CD4-positive, alpha-beta T cell (primary cell): ENCODE measurements at regions of chr7 and their contacts with region 1.

Region 1: GRCh38 chr7:77536413-77537135 is 521 bp upstream of the PTPN12 start:
- DNase-seq: peak; percentile 92 to 99 (median 97)
- ATAC-seq: peak; percentile 88
- H3K4me3 ChIP-seq: peak overlapping the region; percentile 86
- H3K4me3 Mint-ChIP-seq: peak overlapping the region; percentile 95
- H3K27ac ChIP-seq: peak overlapping the region; percentile 45 to 55
- H3K27ac Mint-ChIP-seq: peak overlapping the region; percentile 83
- H3K4me1 ChIP-seq: peaks cover 19% of the 10 kb centered on the region
- H3K4me1 Mint-ChIP-seq: peaks cover 20% of the 10 kb centered on the region
- H3K27me3 ChIP-seq: no peaks in the 10 kb centered on the region
- H3K27me3 Mint-ChIP-seq: no peaks in the 10 kb centered on the region
- CTCF ChIP-seq: no peak

Region 2: DNA sequence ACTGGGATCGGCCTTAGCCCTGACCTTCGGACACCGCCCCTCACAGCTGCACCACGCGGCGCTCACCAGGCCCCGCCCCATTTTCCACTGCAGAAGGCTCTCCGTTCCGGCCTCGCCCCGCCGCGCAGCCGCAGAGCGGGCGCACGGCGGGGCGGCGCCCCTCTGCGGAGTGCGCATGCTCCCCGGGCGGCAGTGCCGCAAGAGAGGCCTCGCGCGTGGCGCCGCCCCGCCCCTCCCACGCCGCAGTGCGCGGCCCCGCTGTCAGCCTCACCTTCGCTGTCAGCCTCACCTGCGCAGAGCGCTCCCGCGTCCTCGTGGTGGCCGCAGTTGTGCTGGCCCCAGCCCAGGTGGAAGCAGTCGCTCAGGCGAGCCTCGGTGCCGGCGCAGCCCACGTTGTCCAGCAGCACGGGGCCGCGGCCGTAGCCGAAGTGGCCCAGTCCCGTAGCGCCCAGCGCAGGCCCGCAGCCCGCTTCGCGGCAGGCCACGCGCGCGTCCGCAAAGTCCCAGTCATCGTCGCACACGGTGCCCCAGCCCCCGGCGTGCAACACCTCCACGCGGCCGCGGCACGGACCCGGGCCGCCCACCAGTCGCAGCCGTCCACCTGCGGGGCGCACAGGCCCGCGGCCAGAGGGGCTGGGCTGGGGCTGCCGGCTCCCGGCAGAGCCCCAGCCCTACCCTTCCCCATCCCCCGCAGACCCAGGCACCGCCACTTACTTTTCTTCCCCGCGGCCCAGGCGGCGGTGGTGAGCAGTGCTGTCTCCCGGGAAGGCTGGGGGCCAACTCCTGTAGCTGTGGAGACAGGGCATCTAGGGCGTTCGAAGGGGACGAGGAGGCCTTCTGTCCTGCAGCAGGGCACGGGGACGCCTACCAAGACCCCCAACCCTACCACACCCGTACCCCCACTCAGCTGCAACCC is 1143.2 kb before region 1 on chr7:
- CTCF ChIA-PET with region 1: no interaction called
- POLR2A ChIA-PET with region 1: no interaction called
- intact Hi-C with region 1: loop called in 1 of 2 experiments (anchors 10 kb)
- DNase-seq: peak; percentile 81 to 97 (median 90)
- ATAC-seq: peak; percentile 81
- H3K4me3 ChIP-seq: peak overlapping the region; percentile 60
- H3K4me3 Mint-ChIP-seq: peak overlapping the region; percentile 88
- H3K27ac ChIP-seq: peak overlapping the region; percentile 42 to 46
- H3K27ac Mint-ChIP-seq: peak overlapping the region; percentile 88
- H3K4me1 ChIP-seq: peaks cover 33% of the 10 kb centered on the region
- H3K4me1 Mint-ChIP-seq: peaks cover 22% of the 10 kb centered on the region
- H3K27me3 ChIP-seq: no peaks in the 10 kb centered on the region
- H3K27me3 Mint-ChIP-seq: no peaks in the 10 kb centered on the region
- CTCF ChIP-seq: no peak

Region 3: GRCh38 chr7:77315182-77315591 is 221.4 kb before region 1 on chr7:
- CTCF ChIA-PET with region 1: no interaction called
- POLR2A ChIA-PET with region 1: no interaction called
- intact Hi-C with region 1: no loop called
- DNase-seq: no peak
- ATAC-seq: no peak
- H3K4me3 ChIP-seq: no peak overlapping the region
- H3K4me3 Mint-ChIP-seq: no peak overlapping the region
- H3K27ac ChIP-seq: no peak overlapping the region
- H3K27ac Mint-ChIP-seq: no peak overlapping the region
- H3K4me1 ChIP-seq: no peaks in the 10 kb centered on the region
- H3K4me1 Mint-ChIP-seq: no peaks in the 10 kb centered on the region
- H3K27me3 ChIP-seq: no peaks in the 10 kb centered on the region
- H3K27me3 Mint-ChIP-seq: no peaks in the 10 kb centered on the region
- CTCF ChIP-seq: no peak

Region 4: DNA sequence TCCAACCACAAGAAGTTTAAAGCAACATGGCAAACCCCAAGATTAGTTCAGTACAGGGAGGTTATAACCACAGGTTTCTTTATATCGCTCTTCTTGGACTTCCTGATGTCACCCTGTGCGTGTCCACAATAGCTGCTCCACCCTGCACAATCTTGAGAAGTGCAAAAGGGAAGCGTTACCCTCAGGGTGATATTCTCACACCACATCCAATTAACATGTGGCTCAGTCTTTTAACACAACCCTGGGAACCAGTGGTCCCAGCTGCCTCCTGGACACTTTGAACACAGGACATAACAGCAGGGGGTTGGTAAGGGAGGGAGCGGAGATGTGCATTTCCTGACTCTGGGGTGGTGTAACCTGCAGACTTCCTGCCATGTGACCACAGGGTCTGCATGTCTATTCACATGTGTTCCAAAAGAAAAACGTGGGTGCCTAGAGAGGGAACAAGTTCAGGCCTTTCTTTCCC is 185.0 kb before region 1 on chr7:
- CTCF ChIA-PET with region 1: no interaction called
- POLR2A ChIA-PET with region 1: interaction called, 4 read pairs
- intact Hi-C with region 1: loop called (anchors 2 kb)
- DNase-seq: peak; percentile 16 to 90 (median 42)
- ATAC-seq: peak; percentile 80
- H3K4me3 ChIP-seq: peak overlapping the region; percentile 23
- H3K4me3 Mint-ChIP-seq: peak overlapping the region; percentile 79
- H3K27ac ChIP-seq: no peak overlapping the region
- H3K27ac Mint-ChIP-seq: peak overlapping the region; percentile 86
- H3K4me1 ChIP-seq: peaks cover 36% of the 10 kb centered on the region
- H3K4me1 Mint-ChIP-seq: peaks cover 77% of the 10 kb centered on the region
- H3K27me3 ChIP-seq: no peaks in the 10 kb centered on the region
- H3K27me3 Mint-ChIP-seq: no peaks in the 10 kb centered on the region
- CTCF ChIP-seq: no peak

Region 5: DNA sequence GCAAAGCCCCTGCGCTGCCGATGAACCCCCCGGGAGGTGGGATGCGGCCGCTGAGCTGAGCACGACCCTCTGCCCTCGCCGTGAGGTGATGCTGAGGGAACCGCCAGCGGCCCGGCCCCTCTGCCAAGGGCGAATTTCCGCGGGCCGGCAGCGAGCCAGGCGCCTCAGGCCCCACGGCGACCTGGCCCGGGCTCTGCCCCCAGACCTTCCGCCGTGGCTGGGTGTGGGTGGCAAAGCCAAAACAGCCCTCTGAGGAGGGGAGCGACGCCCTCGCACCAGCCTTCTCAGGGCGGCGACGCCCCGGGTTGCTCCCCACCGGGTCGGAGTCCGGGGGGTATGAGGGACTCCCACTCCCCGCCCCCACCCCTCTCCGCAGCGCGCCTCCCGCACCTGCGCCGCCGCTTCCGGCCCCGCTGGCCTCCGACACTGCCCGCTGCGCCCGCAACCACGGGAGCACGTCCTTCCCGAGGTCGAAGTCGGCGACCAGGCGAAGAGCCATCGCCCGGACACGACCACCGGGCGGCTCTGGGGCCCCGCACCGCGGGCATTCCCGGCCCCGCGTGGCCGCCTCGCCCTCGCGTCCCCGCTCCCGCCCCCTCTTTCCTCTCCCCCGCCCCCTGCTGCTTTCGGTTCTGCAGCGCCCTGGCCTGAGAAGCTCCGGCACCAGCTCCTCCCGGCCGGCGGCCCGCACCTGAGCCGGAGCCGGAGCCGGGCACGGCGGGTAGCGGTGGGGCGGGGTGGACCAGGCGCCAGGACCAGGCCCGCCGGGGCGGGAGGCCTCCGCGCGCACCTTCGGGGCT is 120.6 kb before region 1 on chr7 and contains the start of gene GSAP:
- CTCF ChIA-PET with region 1: no interaction called
- POLR2A ChIA-PET with region 1: interaction called, 6 read pairs
- intact Hi-C with region 1: loop called (anchors 2 to 5 kb)
- DNase-seq: peak; percentile 18 to 78 (median 42)
- ATAC-seq: peak; percentile 66
- H3K4me3 ChIP-seq: peak within 1 kb of the TSS; percentile 76
- H3K4me3 Mint-ChIP-seq: peak within 1 kb of the TSS; percentile 87
- H3K27ac ChIP-seq: peak within 1 kb of the TSS; percentile 30 to 33
- H3K27ac Mint-ChIP-seq: peak within 1 kb of the TSS; percentile 76
- H3K4me1 ChIP-seq: peaks cover 15% of the 10 kb centered on the region
- H3K4me1 Mint-ChIP-seq: peaks cover 52% of the 10 kb centered on the region
- H3K27me3 ChIP-seq: no peaks in the 10 kb centered on the region
- H3K27me3 Mint-ChIP-seq: no peaks in the 10 kb centered on the region
- CTCF ChIP-seq: peak; percentile 22
- total RNA-seq, gene GSAP: 19.1 to 19.5 TPM

Region 6: DNA sequence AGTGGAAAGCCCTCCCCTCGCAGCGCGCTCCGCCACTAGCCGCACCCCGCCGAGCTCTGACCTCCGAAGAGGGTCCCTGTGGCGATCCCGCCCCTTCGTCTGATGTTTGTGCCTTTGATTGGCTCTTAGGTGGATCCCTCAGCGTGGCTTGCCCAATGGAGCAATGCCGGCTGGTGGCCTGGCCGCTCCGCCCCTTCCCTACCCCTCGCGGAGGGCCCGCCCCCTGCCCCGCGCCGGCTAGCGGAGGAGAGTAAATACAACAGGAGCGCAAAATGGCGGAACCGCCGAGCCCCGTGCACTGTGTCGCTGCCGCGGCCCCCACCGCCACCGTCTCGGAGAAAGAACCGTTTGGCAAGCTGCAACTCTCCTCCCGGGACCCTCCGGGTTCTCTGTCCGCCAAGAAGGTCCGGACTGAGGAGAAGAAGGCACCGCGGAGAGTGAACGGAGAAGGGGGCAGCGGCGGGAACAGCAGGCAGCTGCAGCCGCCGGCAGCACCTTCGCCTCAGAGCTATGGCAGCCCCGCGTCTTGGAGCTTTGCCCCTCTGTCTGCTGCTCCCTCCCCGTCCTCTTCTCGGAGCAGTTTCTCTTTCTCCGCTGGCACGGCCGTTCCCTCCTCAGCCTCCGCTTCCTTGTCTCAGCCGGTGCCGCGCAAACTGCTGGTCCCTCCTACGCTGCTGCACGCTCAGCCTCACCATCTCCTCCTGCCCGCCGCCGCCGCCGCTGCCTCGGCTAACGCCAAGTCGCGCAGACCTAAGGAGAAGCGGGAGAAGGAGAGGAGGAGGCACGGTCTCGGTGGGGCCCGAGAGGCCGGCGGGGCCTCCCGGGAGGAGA is 159.8 kb after region 1 on chr7 and contains the start of gene RSBN1L:
- CTCF ChIA-PET with region 1: no interaction called
- POLR2A ChIA-PET with region 1: interaction called, 5 read pairs
- intact Hi-C with region 1: loop called in 1 of 2 experiments (anchors 2 kb)
- DNase-seq: peak; percentile 95 to 99 (median 98)
- ATAC-seq: peak; percentile 95
- H3K4me3 ChIP-seq: peak within 1 kb of the TSS; percentile 100
- H3K4me3 Mint-ChIP-seq: peak within 1 kb of the TSS; percentile 100
- H3K27ac ChIP-seq: peak within 1 kb of the TSS; percentile 90 to 92
- H3K27ac Mint-ChIP-seq: peak within 1 kb of the TSS; percentile 99
- H3K4me1 ChIP-seq: peaks cover 24% of the 10 kb centered on the region
- H3K4me1 Mint-ChIP-seq: peaks cover 72% of the 10 kb centered on the region
- H3K27me3 ChIP-seq: no peaks in the 10 kb centered on the region
- H3K27me3 Mint-ChIP-seq: no peaks in the 10 kb centered on the region
- CTCF ChIP-seq: peak; percentile 55
- total RNA-seq, gene RSBN1L: 9.0 to 9.6 TPM